T-cell (primary cell): ENCODE measurements at regions of chr17 and their contacts with region 1.

Region 1: DNA sequence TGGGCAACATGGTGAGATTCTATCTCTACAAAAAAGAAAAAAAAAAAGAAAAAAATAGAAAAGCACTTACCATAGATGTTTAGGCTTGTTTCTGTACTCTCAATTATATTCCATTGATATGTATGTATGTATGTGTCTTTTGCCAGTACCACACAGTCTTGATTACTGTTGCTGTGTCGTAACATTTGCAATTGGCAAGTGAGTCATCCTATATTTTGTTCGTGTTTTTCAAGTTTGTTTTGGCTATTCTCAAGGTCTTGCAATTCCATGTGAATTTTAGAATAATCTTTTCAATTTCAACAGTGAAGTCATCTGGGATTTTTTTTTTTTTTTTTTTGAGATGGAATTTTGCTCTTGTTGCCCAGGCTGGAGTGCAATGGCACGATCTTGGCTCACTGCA is 19.3 kb downstream of the SPECC1 start:
- DNase-seq: no peak
- ATAC-seq: no peak
- H3K4me3 ChIP-seq: no peak overlapping the region
- H3K4me3 Mint-ChIP-seq: no peak overlapping the region
- H3K27ac ChIP-seq: no peak overlapping the region
- H3K27ac Mint-ChIP-seq: no peak overlapping the region
- H3K4me1 ChIP-seq: no peaks in the 10 kb centered on the region
- H3K4me1 Mint-ChIP-seq: peaks cover 0 to 8% (median 5%) of the 10 kb centered on the region in 3 donors
- H3K27me3 ChIP-seq: peaks cover 0 to 3% of the 10 kb centered on the region in 2 experiments
- H3K27me3 Mint-ChIP-seq: peaks cover 4 to 23% of the 10 kb centered on the region in 2 donors

Region 2: GRCh38 chr17:20010936-20011335 is 17.5 kb before region 1 on chr17:
- CTCF ChIA-PET with region 1: no interaction called
- POLR2A ChIA-PET with region 1: interaction called in 1 of 2 experiments, 10 read pairs
- DNase-seq: no peak
- ATAC-seq: no peak
- H3K4me3 ChIP-seq: no peak overlapping the region
- H3K4me3 Mint-ChIP-seq: peak overlapping the region; percentile 82 to 84 (median 82)
- H3K27ac ChIP-seq: no peak overlapping the region
- H3K27ac Mint-ChIP-seq: no peak overlapping the region
- H3K4me1 ChIP-seq: peaks cover 4 to 17% of the 10 kb centered on the region in 2 experiments
- H3K4me1 Mint-ChIP-seq: peaks cover 0 to 13% (median 13%) of the 10 kb centered on the region in 3 donors
- H3K27me3 ChIP-seq: peaks cover 5 to 28% of the 10 kb centered on the region in 2 experiments
- H3K27me3 Mint-ChIP-seq: peaks cover 48 to 53% of the 10 kb centered on the region in 2 donors